Activated CD4-positive, alpha-beta T cell treated with anti-CD3 and anti-CD28 coated beads for 36 hours (primary cell): ENCODE measurements at regions of chr2 and their contacts with region 1.

Region 1: DNA sequence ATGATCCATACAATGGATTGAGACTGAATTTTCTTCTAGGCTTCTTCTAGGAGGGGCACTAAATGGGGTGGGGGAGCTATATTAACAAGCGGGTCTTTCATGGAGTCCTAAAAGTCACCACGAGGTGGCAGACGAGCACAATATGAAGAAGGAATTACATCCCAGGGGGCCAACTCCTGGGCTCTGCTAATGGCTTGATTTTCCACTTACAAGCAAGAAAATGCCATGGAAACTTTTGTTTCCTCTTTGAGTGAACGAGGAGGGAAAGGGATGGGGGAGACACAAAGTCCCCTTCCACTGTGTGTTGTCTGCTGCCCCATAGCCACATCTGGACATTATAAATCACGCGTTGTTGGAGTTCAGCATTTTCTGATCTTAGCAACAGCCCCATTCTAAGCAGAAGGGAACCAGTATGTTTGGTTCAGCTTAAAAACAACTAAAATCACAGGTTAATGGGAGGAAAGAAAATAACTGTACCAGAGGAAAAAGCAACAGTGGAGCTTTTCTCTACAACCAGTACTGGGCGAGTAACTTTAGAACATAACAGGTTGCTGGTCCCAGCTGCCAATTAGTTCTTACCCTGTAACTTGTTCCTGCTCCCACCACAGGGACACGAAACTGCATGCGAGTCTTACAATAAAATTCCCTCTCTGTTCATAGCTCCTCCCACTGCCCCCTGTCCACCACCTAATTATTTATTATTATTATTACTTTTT is 285.0 kb upstream of the PARD3B start:
- DNase-seq: peak; percentile 67
- ATAC-seq: peak; percentile 51
- H3K4me3 Mint-ChIP-seq: no peak overlapping the region
- H3K27ac Mint-ChIP-seq: no peak overlapping the region
- H3K4me1 Mint-ChIP-seq: no peaks in the 10 kb centered on the region
- H3K27me3 Mint-ChIP-seq: peaks cover 19% of the 10 kb centered on the region

Region 2: DNA sequence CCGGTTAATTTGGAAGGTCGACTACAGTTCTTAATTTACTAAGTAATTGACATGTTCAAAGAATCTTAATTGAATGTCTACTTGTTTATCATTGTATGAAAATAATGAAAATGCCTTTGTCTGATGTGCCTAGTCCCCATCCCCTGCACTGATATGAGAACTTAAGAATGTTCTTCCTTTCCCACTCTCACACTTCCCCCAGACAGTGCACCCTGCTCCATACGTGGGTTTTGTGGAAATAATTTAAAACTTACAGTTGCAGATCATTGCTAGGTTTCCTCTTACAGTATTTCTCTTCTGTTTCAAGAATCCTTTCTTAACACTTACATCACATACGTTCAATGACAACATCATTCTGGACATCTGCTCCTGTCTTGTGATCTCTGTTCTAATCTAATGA is 320.3 kb before region 1 on chr2:
- CTCF ChIA-PET with region 1: no interaction called
- POLR2A ChIA-PET with region 1: no interaction called
- intact Hi-C with region 1: no loop called
- DNase-seq: no peak
- ATAC-seq: peak; percentile 7
- H3K4me3 Mint-ChIP-seq: peak overlapping the region; percentile 87
- H3K27ac Mint-ChIP-seq: peak overlapping the region; percentile 98
- H3K4me1 Mint-ChIP-seq: peaks cover 53% of the 10 kb centered on the region
- H3K27me3 Mint-ChIP-seq: no peaks in the 10 kb centered on the region

Region 3: DNA sequence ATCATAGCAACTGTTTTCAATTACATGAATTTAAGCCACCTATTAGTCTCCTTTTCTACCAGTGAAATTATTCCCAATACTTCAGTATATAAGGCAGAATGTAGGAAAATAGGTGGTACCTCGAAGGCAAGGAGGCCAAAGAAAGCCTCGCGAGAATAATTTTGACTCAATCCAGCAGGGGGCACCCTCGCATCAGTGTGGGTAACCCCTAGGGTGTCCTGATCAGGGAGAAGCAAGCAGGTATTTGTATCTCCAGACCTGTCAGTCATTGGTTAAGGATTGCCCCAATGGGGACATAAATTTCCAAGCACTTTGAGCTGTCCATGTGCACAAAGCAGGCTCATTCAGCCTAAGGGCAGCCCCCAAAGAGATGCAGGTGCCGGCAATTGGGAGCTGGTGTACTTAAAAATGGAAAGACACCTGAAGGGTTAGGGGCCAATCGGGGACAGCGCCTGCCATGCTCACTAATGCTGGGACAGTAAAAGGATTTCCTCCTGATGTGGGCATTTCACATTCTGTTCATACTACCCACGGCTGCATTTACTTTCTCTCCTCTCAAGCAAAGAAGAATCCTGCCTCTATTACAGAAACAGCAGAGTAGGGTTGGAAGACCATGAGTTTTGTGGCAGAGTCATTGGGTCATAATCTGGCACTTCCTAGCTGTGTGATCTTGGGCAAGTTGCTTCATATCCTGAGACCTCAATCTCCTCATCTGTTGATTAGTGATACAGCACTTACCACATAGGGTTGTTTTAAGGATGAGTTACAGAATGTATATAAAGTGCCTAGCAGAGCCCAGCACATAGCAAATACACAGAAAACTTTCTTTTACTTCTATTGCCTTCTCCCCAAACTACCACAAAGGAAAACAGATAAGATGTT is 187.6 kb before region 1 on chr2:
- CTCF ChIA-PET with region 1: interaction called, 7 read pairs
- POLR2A ChIA-PET with region 1: no interaction called
- intact Hi-C with region 1: loop called in 1 of 2 experiments (anchors 2 kb)
- DNase-seq: peak; percentile 88
- ATAC-seq: peak; percentile 89
- H3K4me3 Mint-ChIP-seq: no peak overlapping the region
- H3K27ac Mint-ChIP-seq: no peak overlapping the region
- H3K4me1 Mint-ChIP-seq: peaks cover 7% of the 10 kb centered on the region
- H3K27me3 Mint-ChIP-seq: peaks cover 5% of the 10 kb centered on the region

Region 4: DNA sequence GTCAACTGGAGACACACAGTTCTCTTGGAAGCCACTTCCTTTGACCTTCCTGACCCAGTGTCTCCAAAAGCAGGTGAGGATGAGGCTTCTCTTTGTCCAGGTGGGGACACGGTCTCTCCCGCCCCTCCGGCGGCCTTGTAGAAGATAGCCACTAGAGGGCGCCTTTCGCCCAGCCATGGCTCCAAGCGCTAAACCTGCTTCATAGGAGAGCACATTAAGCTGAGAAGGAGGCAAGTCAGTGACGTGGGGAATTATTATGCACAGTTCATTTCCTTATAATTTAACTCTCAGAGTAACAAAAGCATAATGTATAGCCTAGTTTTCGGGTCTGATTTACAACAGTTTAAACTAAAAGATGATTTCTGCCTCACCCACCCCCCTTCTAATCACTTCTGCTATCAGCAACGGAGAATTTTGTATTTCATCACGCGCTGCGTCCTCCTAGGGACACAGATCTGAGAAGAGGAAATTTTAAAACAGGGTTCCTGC is 115.0 kb before region 1 on chr2:
- CTCF ChIA-PET with region 1: interaction called, 13 read pairs
- POLR2A ChIA-PET with region 1: no interaction called
- intact Hi-C with region 1: no loop called
- DNase-seq: peak; percentile 89
- ATAC-seq: peak; percentile 97
- H3K4me3 Mint-ChIP-seq: peak overlapping the region; percentile 65
- H3K27ac Mint-ChIP-seq: peak overlapping the region; percentile 68
- H3K4me1 Mint-ChIP-seq: peaks cover 10% of the 10 kb centered on the region
- H3K27me3 Mint-ChIP-seq: peaks cover 13% of the 10 kb centered on the region

Region 5: GRCh38 chr2:204272089-204272488 is 11.8 kb after region 1 on chr2:
- CTCF ChIA-PET with region 1: interaction called, 21 read pairs
- POLR2A ChIA-PET with region 1: no interaction called
- intact Hi-C with region 1: no loop called
- DNase-seq: no peak
- ATAC-seq: no peak
- H3K4me3 Mint-ChIP-seq: no peak overlapping the region
- H3K27ac Mint-ChIP-seq: no peak overlapping the region
- H3K4me1 Mint-ChIP-seq: no peaks in the 10 kb centered on the region
- H3K27me3 Mint-ChIP-seq: peaks cover 6% of the 10 kb centered on the region

Region 6: DNA sequence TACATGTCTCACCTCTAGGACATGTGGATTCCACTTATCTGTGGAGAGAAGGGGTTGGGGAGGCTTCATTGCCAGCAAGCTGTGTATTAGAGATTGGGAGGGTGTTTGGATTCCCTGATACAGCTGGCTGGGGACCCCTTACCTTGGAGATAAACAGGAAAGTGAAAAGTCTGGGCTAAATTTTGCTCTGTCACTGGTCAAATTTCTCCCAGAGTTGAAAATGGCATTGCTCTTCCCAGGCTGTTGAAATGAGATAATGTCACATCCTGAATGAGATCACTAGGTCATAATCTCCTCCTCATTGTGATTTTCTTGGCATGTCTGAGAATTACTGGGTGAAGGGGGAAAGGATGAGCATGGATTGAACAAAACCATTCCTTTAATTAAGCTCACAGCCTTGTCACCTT is 19.9 kb after region 1 on chr2:
- CTCF ChIA-PET with region 1: interaction called, 21 read pairs
- POLR2A ChIA-PET with region 1: no interaction called
- intact Hi-C with region 1: no loop called
- DNase-seq: no peak
- ATAC-seq: no peak
- H3K4me3 Mint-ChIP-seq: no peak overlapping the region
- H3K27ac Mint-ChIP-seq: no peak overlapping the region
- H3K4me1 Mint-ChIP-seq: no peaks in the 10 kb centered on the region
- H3K27me3 Mint-ChIP-seq: peaks cover 7% of the 10 kb centered on the region

Region 7: DNA sequence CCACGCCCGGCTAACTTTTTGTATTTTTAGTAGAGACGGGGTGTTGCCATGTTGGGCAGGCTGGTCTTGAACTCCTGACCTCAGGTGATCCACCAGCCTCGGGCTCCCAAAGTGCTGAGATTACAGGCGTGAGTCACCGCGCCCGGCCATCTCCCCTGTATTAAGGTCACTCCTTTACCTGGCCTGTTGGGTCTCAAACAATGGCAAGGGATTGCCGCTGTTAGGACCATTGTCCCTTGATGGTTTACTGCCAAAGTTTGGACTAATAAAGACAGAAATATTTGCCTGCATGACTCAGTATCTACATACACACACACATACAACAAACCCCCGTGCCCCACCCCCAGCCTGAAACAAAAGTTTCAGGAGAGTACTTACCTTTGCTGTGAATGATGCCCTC is 301.4 kb after region 1 on chr2:
- CTCF ChIA-PET with region 1: no interaction called
- POLR2A ChIA-PET with region 1: no interaction called
- intact Hi-C with region 1: no loop called
- DNase-seq: no peak
- ATAC-seq: no peak
- H3K4me3 Mint-ChIP-seq: no peak overlapping the region
- H3K27ac Mint-ChIP-seq: no peak overlapping the region
- H3K4me1 Mint-ChIP-seq: no peaks in the 10 kb centered on the region
- H3K27me3 Mint-ChIP-seq: peaks cover 13% of the 10 kb centered on the region

Region 8: GRCh38 chr2:204645018-204645773 is 384.9 kb after region 1 on chr2:
- CTCF ChIA-PET with region 1: no interaction called
- POLR2A ChIA-PET with region 1: no interaction called
- intact Hi-C with region 1: no loop called
- DNase-seq: no peak
- ATAC-seq: no peak
- H3K4me3 Mint-ChIP-seq: no peak overlapping the region
- H3K27ac Mint-ChIP-seq: no peak overlapping the region
- H3K4me1 Mint-ChIP-seq: no peaks in the 10 kb centered on the region
- H3K27me3 Mint-ChIP-seq: no peaks in the 10 kb centered on the region

Region 9: DNA sequence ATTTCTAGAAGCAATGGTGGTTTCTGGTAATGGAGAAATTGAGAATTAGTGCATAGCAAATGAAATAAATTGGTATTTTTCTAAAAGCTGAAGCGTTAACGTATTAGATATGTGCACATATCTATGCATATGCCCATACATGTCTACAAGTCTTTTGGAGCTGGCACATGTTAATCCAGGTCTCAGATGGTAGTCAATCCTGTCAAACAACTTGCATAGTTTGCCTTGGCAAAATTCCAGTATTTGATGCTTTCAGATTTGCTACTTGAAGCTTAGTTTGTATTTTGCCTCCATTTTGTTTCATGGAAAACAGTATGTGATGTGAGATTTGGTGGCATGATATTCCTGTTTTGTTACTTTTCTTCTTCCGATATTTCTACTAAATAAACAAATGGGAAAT is 589.6 kb after region 1 on chr2:
- CTCF ChIA-PET with region 1: no interaction called
- POLR2A ChIA-PET with region 1: no interaction called
- intact Hi-C with region 1: no loop called
- DNase-seq: no peak
- ATAC-seq: no peak
- H3K4me3 Mint-ChIP-seq: no peak overlapping the region
- H3K27ac Mint-ChIP-seq: no peak overlapping the region
- H3K4me1 Mint-ChIP-seq: no peaks in the 10 kb centered on the region
- H3K27me3 Mint-ChIP-seq: peaks cover 5% of the 10 kb centered on the region